Posterior cingulate gyrus (tissue), 11 donors: ENCODE measurements at regions of chr6 and their contacts with region 1.

Region 1: DNA sequence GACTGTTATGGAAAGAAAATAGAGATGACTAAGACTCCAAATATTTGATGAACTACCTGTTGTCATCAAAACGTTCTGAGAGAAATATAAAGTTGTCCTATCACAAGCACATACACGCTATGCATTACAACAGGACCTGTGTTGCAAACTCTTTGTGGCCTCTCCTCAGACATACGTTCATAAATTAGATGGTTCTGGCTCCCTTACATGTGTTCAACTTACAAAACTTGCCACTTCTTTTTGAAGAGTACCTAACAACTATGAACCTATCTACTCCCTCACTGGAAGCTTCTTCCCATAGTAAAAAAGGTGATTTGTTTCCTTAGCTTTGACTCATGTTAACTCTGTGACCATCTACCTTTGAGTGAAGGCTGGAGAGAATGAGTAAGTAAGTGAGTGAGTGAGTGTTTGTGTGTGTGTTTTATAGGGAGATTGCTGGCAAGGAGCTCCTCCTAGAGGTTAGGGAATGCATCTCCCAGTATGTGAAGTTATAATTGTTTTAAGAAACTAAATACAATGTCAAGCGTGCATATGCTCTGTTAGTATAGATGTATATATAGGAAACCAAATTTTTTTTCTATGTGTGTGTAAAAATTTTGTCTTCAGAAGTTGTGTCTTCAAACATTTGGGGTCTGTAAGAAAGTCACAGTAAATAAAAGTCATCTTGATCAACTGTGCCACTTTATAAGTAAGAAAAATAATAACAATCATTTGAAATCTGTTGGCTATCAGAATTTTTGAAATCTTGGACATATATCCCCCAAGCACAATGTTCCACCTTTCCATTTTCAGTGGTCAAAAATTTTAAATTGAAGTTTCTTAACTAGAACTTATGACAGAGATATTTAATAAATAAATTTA is 1211.1 kb upstream of the GJE1 start:
- DNase-seq: no peak

Region 2: DNA sequence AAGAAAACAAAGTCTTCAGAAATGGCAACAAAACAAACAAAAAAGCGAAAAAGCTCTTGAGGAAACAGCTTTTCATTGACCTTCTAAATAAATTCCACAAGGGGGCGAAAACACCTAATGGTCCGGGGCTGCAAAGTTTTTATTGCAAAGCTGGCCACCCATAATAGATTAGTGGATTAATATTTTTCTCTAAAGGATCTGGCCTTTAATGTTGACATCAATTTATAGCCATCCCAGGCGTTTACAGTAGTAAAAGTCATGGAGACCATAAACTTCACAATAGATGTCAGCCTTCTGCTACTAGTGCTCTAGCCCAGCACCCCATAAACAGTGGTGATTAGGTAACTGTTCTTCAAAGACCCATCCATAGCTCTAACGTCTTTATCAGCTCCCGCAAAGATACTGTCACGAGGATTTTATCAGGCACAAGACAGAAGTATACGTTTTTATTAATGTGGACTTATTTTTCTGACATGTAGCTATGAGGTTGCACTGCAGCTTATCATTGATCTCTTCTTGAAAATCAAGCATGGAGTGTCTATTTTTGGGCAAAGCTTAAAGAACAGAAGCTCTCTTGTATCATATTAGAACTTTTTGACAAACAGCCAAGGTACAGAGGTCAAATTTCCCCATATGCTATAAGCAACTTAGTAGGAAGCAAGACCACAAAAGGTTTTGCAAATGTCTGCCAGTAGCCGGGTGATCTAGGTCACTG is 1551.9 kb before region 1 on chr6:
- intact Hi-C with region 1: loop called (anchors 5 kb)
- DNase-seq: no peak

Region 3: GRCh38 chr6:140554421-140554820 is 367.2 kb before region 1 on chr6:
- intact Hi-C with region 1: no loop called
- DNase-seq: peak in 1 of 10 donors; percentile 41